ENCODE measurements at regions of chr18 and their contacts with region 1.

Region 1: GRCh38 chr18:62584241-62585120 is 61.7 kb downstream of the ZCCHC2 start:
- DNase-seq: peak; percentile 92
- ATAC-seq: peak; percentile 83
- H3K4me3 Mint-ChIP-seq: peak overlapping the region; percentile 9
- H3K27ac Mint-ChIP-seq: peak overlapping the region; percentile 96
- H3K4me1 Mint-ChIP-seq: peaks cover 56% of the 10 kb centered on the region
- H3K27me3 Mint-ChIP-seq: no peaks in the 10 kb centered on the region

Region 2: GRCh38 chr18:62751341-62751821 is 166.9 kb after region 1 on chr18:
- CTCF ChIA-PET with region 1: no interaction called
- DNase-seq: no peak
- ATAC-seq: no peak
- H3K4me3 Mint-ChIP-seq: no peak overlapping the region
- H3K27ac Mint-ChIP-seq: no peak overlapping the region
- H3K4me1 Mint-ChIP-seq: peaks cover 12% of the 10 kb centered on the region
- H3K27me3 Mint-ChIP-seq: no peaks in the 10 kb centered on the region

Region 3: GRCh38 chr18:62957885-62958472 is 373.5 kb after region 1 on chr18:
- CTCF ChIA-PET with region 1: interaction called, 20 read pairs
- DNase-seq: peak; percentile 66
- ATAC-seq: peak; percentile 73
- H3K4me3 Mint-ChIP-seq: no peak overlapping the region
- H3K27ac Mint-ChIP-seq: no peak overlapping the region
- H3K4me1 Mint-ChIP-seq: peaks cover 15% of the 10 kb centered on the region
- H3K27me3 Mint-ChIP-seq: no peaks in the 10 kb centered on the region

Measured in activated CD8-positive, alpha-beta memory T cell treated with anti-CD3 and anti-CD28 coated beads, Interleukin-2, amount 10 ng/mL, durations not matched to agents 7 days and 5 days (primary cell).